ENCODE measurements at regions of chr11 and their contacts with region 1.

Region 1: DNA sequence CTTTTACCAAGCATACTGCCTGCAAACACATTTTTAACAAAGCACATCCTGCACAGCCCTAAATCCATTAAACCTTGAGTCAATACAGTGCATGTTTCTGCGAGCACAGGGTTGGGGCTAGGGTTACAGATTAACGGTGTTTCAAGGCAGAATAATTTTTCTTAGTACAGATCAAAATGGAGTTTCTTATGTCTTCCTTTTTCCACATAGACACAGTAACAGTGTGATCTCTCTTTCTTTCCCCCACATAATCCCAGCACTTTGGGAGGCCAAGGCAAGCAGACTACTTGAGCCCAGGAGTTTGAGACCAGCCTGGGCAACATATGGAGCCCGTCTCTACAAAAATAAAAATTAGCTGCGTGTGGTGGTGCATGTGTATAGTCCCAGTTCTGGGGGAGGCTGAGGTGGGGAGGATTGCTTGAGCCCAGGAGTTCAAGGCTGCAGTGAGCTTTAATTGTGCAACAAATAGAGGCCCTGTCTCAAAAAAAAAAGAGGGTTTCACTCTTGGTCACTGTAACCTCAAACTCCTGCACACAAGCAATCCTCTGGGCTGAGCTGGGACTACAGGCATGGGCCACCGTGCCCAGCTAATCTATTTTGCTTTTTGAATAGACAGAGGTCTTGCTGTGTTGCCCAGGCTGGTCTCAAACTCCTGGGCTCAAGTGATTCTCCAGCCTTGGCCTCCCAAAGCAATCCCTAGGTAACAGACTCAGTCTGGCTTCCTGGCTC is 19.7 kb upstream of the SLC3A2 start:
- DNase-seq: peak in 1 of 3 donors; percentile 2
- ATAC-seq: no peak
- H3K4me3 ChIP-seq: no peak overlapping the region
- H3K4me1 ChIP-seq: peaks cover 9% of the 10 kb centered on the region
- CTCF ChIP-seq: no peak

Region 2: DNA sequence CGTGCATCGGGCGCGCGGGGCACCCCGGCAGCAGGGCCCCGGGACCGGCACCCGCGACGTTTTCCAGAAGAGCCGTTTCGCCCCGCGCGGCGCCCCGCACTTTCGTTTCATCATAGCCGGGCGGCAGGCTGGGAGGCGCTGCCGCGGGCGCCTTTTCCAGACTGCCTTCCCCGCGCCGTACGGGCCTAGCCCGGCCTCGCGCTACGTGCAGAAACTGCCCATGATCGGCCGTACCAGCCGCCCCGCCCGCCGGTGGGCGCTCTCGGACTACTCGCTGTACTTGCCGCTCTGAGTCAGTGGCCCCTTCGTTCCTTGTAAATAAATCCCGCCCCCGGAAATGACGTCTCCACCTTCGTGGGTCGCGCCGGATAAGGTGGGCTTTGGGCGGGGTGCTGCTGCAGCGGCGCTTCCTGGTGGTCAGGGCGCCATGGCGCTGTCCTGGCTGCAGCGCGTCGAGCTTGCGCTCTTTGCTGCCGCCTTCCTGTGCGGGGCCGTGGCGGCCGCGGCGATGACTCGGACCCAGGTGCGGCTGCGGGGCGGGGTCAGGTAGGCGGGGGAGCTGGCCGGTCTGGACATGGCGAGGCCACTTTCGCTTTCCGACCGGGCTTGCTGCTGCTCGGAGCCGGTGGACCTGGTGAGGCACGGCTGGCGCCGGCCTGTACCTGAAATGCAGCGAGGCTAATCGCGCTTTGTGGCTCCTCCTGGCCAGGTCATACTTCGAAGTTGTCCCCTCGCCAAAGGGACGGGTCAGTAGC is 73.8 kb before region 1 on chr11 and contains the start of gene TMEM179B:
- intact Hi-C with region 1: loop called (anchors 2 to 5 kb)
- DNase-seq: peak; percentile 96 to 100 (median 98)
- ATAC-seq: peak; percentile 87
- H3K4me3 ChIP-seq: peak within 1 kb of the TSS; percentile 98
- H3K4me1 ChIP-seq: peaks cover 35% of the 10 kb centered on the region
- CTCF ChIP-seq: peak; percentile 44
- total RNA-seq, gene TMEM179B: 39.8 to 62.2 (median 54.0) TPM